ENCODE measurements at regions of chr15 and their contacts with region 1.

Region 1: DNA sequence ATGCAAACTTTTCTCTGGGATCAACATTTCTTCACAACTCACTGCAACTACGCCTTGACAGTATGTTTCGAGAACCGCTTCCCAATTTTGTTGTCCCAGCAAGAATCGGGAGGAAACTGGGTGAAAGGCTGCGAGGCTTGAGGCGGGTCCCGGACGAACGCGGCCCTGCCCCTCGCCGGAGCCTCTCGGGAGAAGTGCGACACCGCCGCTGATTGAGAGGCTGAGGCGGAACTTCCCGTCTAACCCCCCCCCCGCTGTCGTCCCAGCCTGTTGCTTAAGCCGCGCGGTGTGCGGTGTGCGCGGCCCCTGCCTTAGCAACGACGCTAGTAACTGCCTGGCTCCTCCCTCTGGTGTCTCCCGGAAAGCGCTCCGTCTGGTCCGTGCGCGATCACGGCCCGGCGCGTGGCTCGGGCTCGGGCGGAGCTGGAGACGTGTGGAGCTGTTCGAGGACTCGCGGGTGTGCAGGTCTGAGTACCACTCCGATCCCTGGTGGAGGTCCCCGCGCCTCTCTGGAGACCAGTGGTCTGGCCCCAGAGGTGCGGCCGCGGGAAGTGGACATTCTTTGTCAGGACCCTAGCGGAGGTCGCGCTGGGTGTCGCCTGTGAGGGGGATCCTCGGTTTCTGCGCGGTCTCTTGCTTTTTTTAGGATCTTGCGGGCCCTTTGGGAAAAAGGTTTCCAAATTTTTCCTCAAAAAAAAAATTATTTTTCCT is at the starts of genes DTWD1 and FAM227B:
- DNase-seq: peak; percentile 97
- H3K4me3 ChIP-seq: peak within 1 kb of the TSS; percentile 77 to 79
- H3K27ac ChIP-seq: peak within 1 kb of the TSS; percentile 83 to 94
- H3K4me1 ChIP-seq: peaks cover 12% of the 10 kb centered on the region
- H3K27me3 ChIP-seq: no peaks in the 10 kb centered on the region
- CTCF ChIP-seq: peak in 2 of 3 experiments; percentile 13 to 23
- POLR2A ChIP-seq: peak; percentile 22
- total RNA-seq, gene DTWD1: 14.3 to 17.2 TPM
- total RNA-seq, gene FAM227B: 19.0 to 36.4 TPM

Region 2: GRCh38 chr15:49876401-49877038 is 255.7 kb after region 1 on chr15:
- intact Hi-C with region 1: loop called (anchors 10 kb)
- DNase-seq: peak; percentile 46
- H3K4me3 ChIP-seq: no peak overlapping the region
- H3K27ac ChIP-seq: peak overlapping the region; percentile 5 to 80
- H3K4me1 ChIP-seq: peaks cover 16% of the 10 kb centered on the region
- H3K27me3 ChIP-seq: no peaks in the 10 kb centered on the region
- CTCF ChIP-seq: peak; percentile 49 to 62 (median 54)
- POLR2A ChIP-seq: no peak